Dendritic cell treated with granulocyte-macrophage colony-stimulating factor and Interleukin-4, amounts not matched to agents 40 ng/mL and 50 ng/mL, for 4 days (primary cell): ENCODE measurements at regions of chr20 and their contacts with region 1.

Region 1: GRCh38 chr20:46206025-46206424 is 87.9 kb downstream of the CD40 start:
- H3K4me3 Mint-ChIP-seq: peak overlapping the region; percentile 2
- H3K27ac Mint-ChIP-seq: peak overlapping the region; percentile 54
- H3K4me1 Mint-ChIP-seq: peaks cover 78% of the 10 kb centered on the region
- H3K27me3 Mint-ChIP-seq: peaks cover 60% of the 10 kb centered on the region

Region 2: DNA sequence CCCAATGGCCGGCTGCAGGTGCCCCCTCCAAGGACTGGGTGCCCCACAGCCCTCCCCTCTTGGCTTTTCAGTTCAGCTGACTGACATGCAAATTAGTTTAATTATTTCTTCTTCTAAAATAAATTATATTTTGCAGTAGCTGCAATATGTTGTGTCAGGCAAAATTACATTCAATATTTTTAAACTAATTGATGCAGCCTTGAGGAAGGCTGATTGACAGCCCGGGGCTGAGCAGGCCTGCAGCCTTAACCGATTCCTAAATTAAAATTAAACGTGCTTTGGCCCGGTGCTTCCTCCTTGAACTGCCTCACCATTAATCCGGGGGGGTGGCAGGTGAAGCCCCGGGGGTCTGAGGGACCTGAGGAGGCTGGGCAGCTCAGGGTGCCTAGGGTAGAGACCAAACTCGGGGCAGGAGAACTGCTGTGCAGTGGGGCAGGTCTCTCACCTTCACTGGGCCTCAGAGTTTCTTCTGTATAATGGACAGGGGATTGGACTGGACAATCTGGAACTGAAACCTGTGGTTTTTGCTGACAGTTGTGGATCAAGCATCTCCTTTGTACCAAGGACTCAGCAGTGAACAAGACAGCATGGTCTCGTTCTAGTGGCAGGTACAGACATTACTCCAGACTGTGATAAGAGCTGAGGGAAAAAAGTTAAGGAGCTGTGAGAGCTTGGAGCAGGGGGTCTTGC is 15.4 kb before region 1 on chr20:
- intact Hi-C with region 1: loop called (anchors 2 kb)
- H3K4me3 Mint-ChIP-seq: no peak overlapping the region
- H3K27ac Mint-ChIP-seq: no peak overlapping the region
- H3K4me1 Mint-ChIP-seq: peaks cover 44% of the 10 kb centered on the region
- H3K27me3 Mint-ChIP-seq: peaks cover 56% of the 10 kb centered on the region

Region 3: DNA sequence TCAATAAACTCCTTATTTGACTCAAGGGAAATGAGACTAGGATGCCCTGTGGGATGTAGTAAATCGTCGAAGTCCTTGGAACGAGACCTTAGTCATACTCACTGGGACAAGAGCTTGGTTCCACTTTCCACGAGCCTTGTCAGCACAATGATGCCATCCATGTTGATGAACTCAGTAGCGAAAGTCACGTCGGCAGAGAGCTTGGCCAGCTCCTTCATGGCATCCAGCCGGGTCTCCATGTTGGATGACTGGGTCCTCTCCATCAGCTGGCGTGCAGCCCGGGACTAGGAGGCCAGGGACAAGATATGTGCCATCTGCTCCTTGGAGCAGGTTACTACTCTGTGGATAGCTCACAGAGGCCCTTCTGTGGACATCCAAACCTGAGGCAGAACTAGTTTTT is 182.9 kb after region 1 on chr20:
- intact Hi-C with region 1: no loop called
- H3K4me3 Mint-ChIP-seq: no peak overlapping the region
- H3K27ac Mint-ChIP-seq: no peak overlapping the region
- H3K4me1 Mint-ChIP-seq: no peaks in the 10 kb centered on the region
- H3K27me3 Mint-ChIP-seq: no peaks in the 10 kb centered on the region